RWPE1 (cell line): ENCODE measurements at regions of chr5 and their contacts with region 1.

Region 1: DNA sequence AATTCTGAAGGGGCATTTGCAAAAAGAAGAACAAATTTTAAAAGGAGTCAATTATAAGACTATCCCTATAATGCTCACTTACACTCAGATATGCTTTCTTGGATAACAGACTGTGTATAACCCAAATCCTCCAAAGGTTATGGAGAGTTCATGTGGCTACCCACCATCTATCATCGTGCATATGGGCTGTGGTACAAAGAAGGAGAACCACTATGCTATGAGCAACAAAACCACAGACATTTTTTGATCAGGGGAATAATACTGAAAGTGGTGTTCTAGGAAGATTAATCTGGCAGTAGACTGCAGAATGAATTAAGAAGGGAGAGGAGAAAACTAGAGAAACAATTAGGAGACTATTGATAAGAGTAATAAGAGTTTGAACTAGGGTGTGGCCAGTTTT is 16.8 kb downstream of the NR3C1 start:
- DNase-seq: no peak
- H3K27ac ChIP-seq: no peak overlapping the region
- CTCF ChIP-seq: no peak

Region 2: GRCh38 chr5:143235423-143235822 is 151.3 kb before region 1 on chr5:
- CTCF ChIA-PET with region 1: no interaction called
- POLR2A ChIA-PET with region 1: interaction called, 10 read pairs
- DNase-seq: peak; percentile 99
- H3K27ac ChIP-seq: peak overlapping the region; percentile 82
- CTCF ChIP-seq: no peak

Region 3: GRCh38 chr5:143347698-143348344 is 38.9 kb before region 1 on chr5:
- CTCF ChIA-PET with region 1: no interaction called
- POLR2A ChIA-PET with region 1: no interaction called
- DNase-seq: no peak
- H3K27ac ChIP-seq: no peak overlapping the region
- CTCF ChIP-seq: no peak